ENCODE measurements at regions of chrX and their contacts with region 1.

Region 1: GRCh38 chrX:23742697-23743622 is at the start of gene ACOT9:
- DNase-seq: peak; percentile 56 to 82
- H3K4me3 ChIP-seq: peak within 1 kb of the TSS; percentile 62 to 83 (median 71)
- H3K27ac ChIP-seq: peak within 1 kb of the TSS; percentile 62
- H3K4me1 ChIP-seq: no peaks in the 10 kb centered on the region
- H3K27me3 ChIP-seq: no peaks in the 10 kb centered on the region
- CTCF ChIP-seq: no peak
- EP300 ChIP-seq: no peak
- POLR2A ChIP-seq: peak in 1 of 2 experiments; percentile 59; a peak in 1 of 3 replicates
- RAD21 ChIP-seq: no peak
- total RNA-seq, gene ACOT9: 37.4 and 39.5 TPM in 2 replicates

Region 2: GRCh38 chrX:23592741-23593140 is 150.2 kb before region 1 on chrX:
- CTCF ChIA-PET with region 1: no interaction called
- POLR2A ChIA-PET with region 1: no interaction called
- DNase-seq: no peak
- H3K4me3 ChIP-seq: no peak overlapping the region
- H3K27ac ChIP-seq: no peak overlapping the region
- H3K4me1 ChIP-seq: no peaks in the 10 kb centered on the region
- H3K27me3 ChIP-seq: no peaks in the 10 kb centered on the region
- CTCF ChIP-seq: no peak
- EP300 ChIP-seq: no peak
- POLR2A ChIP-seq: no peak
- RAD21 ChIP-seq: no peak

Region 3: DNA sequence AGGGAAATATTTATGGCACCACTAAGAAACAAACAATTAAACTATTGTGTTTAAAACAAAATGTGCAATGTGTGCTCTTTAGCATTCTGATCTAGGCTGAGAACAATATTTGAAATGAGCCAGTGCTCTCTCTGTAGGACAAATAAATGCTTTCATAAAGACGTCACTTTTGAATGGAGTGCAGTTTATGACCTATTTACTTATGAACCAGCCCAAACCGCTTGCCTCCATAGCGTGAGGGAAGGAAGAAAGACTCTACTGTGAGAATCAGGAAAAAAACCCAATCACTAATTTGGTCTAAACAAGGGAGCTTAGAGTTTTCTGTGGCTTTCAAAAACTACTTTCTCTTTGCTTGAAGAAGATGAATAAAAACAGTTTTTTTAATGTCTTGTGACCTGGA is 79.4 kb after region 1 on chrX:
- CTCF ChIA-PET with region 1: no interaction called
- POLR2A ChIA-PET with region 1: no interaction called
- DNase-seq: no peak
- H3K4me3 ChIP-seq: no peak overlapping the region
- H3K27ac ChIP-seq: no peak overlapping the region
- H3K4me1 ChIP-seq: no peaks in the 10 kb centered on the region
- H3K27me3 ChIP-seq: no peaks in the 10 kb centered on the region
- CTCF ChIP-seq: no peak
- EP300 ChIP-seq: no peak
- POLR2A ChIP-seq: no peak
- RAD21 ChIP-seq: no peak

Region 4: DNA sequence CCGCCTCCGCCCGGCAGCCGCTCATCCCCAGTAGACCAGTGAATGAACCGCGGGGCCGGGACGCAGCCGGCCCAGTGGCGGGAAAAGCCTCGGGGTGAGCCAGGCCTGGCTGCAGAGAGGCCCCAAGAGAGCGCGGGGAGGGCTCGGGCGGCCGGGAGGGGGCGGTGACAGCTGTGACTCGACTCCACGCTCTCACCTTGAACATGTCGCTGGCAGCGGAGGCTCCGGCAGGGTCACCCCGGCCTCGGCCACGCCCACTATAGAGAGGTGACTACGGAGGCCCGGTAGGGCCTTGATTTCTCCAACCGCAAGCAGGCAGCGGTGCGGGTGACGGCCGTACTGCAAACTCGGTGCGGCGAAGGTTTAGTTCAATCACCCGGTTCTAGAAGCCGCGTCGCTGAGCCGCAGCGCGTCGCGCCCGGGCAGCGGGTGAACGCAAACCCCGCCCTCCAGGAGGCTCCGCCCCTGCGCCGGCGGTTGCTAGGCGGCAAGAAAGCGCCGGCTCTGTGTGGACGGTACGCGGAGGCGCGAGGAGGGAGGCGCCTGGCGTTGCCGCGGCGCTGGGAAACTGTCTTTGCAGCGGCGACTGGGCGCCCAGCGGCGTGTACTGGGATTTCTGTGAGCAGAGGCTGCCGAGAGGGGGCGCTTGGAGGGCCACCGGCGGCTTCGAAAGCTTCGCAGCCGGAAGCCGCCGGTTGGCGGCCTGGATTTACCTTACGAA is 164.7 kb after region 1 on chrX and contains the starts of genes APOO and CXorf58:
- CTCF ChIA-PET with region 1: interaction called, 16 read pairs
- POLR2A ChIA-PET with region 1: interaction called, 13 read pairs
- DNase-seq: peak; percentile 84 to 87
- H3K4me3 ChIP-seq: peak within 1 kb of the TSS; percentile 58 to 90 (median 64)
- H3K27ac ChIP-seq: peak within 1 kb of the TSS; percentile 45; the same call in 1 of the 2 replicates
- H3K4me1 ChIP-seq: peaks cover 0 to 4% (median 0%) of the 10 kb centered on the region in 4 experiments; a peak in 1 of 7 replicates
- H3K27me3 ChIP-seq: no peaks in the 10 kb centered on the region
- CTCF ChIP-seq: peak; percentile 62 to 99 (median 64)
- EP300 ChIP-seq: peak in 1 of 2 experiments; percentile 33; a peak in 1 of 3 replicates
- POLR2A ChIP-seq: no peak
- RAD21 ChIP-seq: peak; percentile 35 to 57; a peak in 3 of 4 replicates
- total RNA-seq, gene APOO: 45.0 and 48.9 TPM in 2 replicates
- total RNA-seq, gene CXorf58: not detected in 2 replicates

Region 5: DNA sequence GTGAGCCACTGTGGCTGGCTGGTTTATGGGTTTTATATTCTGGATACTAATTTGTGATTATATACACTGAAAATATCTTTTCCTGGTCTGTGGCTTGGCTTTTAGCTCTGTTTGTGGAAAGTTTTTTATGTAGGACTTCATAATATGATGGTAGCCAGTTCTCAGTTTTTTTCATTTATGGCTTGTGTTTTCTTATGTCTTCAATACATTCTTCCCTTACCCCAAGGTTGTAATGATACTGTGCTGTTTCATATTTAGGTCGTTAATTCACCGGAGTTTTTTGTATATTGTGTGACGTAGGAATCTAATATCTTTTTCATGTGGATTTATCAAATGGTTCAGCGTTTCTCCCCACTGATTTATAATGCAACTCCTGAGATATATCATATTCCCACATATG is 413.2 kb after region 1 on chrX:
- CTCF ChIA-PET with region 1: no interaction called
- POLR2A ChIA-PET with region 1: no interaction called
- DNase-seq: no peak
- H3K4me3 ChIP-seq: no peak overlapping the region
- H3K27ac ChIP-seq: no peak overlapping the region
- H3K4me1 ChIP-seq: peaks cover 0 to 3% (median 1%) of the 10 kb centered on the region in 4 experiments; a peak in 2 of 7 replicates
- H3K27me3 ChIP-seq: no peaks in the 10 kb centered on the region
- CTCF ChIP-seq: no peak
- EP300 ChIP-seq: no peak
- POLR2A ChIP-seq: no peak
- RAD21 ChIP-seq: no peak

Measured in H1 (cell line).